ENCODE measurements at regions of chr2 and their contacts with region 1.

Region 1: GRCh38 chr2:8670580-8670979 is 11.3 kb upstream of the ID2 start:
- DNase-seq: no peak
- H3K4me3 ChIP-seq: no peak overlapping the region
- H3K27ac ChIP-seq: no peak overlapping the region
- H3K4me1 ChIP-seq: no peaks in the 10 kb centered on the region
- H3K27me3 ChIP-seq: no peaks in the 10 kb centered on the region
- CTCF ChIP-seq: no peak

Region 2: DNA sequence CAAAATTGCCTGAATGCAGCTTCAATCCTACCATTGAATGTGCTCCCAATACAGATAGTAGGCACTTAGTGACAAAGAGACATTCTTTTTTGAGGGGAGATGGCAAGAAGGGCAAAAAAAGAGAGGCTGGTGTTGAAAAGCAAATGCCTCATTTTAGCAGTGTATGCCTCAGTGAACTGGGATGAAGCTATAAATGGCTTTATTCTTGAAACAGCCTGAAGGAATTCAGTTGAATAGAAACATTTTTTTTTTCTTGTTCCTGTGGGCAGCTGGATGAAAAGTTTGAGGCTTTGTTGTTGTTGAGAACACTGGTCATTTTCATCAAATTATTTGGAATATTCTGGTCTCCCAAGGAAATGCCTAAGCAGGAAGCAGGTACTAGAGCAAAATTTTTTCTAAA is 1524.4 kb before region 1 on chr2:
- CTCF ChIA-PET with region 1: interaction called, 15 read pairs
- POLR2A ChIA-PET with region 1: no interaction called
- intact Hi-C with region 1: no loop called
- DNase-seq: no peak
- H3K4me3 ChIP-seq: no peak overlapping the region
- H3K27ac ChIP-seq: peak overlapping the region; percentile 36
- H3K4me1 ChIP-seq: no peaks in the 10 kb centered on the region
- H3K27me3 ChIP-seq: no peaks in the 10 kb centered on the region
- CTCF ChIP-seq: no peak

Measured in A673 (cell line).